ENCODE measurements at regions of chr9 and their contacts with region 1.

Region 1: DNA sequence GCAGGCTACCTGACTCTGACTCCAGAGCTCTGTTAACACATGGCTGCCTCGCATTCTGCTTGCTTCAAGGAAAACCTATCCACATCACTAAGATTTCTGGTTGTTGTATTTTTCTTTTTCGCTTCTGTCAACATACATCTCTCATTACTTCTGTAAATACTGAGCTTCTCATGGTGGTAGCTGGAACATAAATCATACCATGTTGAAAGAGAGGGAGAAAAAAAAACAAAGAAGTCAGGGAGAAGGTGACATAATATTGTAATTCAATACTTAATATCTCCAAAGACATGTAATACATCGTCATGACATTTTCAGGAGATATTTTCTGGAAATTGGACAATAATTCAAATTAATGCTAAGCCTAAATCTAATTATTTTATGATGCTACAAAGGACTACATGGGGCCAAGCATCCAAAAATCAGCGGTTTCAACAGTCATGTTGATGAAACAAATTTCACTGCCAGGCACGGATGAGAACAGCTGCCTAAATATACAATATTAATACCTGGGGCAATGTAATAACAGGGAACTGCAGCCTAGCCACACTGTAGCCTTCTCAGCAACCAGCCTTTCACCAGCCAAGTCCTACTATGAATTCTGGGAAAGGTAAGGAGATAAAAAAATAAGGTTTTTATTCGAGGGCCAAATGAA is 332.0 kb downstream of the TRIM32 start:
- DNase-seq: no peak
- ATAC-seq: no peak
- H3K4me3 ChIP-seq: no peak overlapping the region
- H3K27ac ChIP-seq: no peak overlapping the region
- H3K4me1 ChIP-seq: no peaks in the 10 kb centered on the region
- H3K27me3 ChIP-seq: peaks cover 0 to 2% (median 0%) of the 10 kb centered on the region in 3 donors
- CTCF ChIP-seq: no peak

Region 2: GRCh38 chr9:116959809-116960208 is 59.3 kb before region 1 on chr9:
- intact Hi-C with region 1: no loop called
- DNase-seq: no peak
- ATAC-seq: no peak
- H3K4me3 ChIP-seq: no peak overlapping the region
- H3K27ac ChIP-seq: no peak overlapping the region
- H3K4me1 ChIP-seq: no peaks in the 10 kb centered on the region
- H3K27me3 ChIP-seq: no peaks in the 10 kb centered on the region
- CTCF ChIP-seq: no peak

Region 3: DNA sequence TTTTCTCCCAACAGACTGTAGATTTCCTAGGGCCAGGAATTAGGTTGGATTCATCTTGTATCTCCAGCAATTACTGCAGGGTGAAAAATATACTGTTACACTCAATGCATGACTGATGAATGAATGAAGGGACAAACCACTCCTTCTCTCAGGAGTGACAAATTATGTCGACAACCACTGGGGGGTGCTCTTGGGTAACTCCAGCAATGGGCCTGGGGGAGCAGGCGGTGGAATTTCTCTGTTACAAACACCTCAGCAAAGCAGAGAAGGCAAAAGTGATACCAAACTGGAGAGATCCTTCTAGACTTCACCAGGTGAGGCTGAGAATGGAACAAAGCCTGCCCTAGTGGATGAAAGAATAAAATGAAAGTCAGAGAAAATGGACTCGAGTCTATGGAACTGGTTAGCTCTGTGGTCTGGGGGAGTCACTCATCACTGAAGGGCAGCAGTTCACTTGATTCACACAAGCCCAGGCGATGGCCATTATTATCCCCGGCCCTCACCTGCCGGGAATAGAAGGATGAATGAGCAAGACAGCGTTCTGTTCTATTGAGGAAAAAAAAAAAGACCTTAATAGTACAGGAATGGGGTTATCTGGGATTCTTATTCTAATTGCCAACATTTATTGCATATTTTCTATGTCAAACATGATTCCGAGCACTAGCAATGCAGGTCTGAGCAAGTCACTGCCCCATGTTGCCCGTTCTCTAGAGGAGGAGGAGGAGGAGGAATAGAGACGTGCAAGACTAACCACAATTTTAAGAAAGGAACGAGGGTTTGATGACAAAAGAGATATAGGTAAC is 54.6 kb after region 1 on chr9:
- intact Hi-C with region 1: loop called in 1 of 2 experiments (anchors 10 kb)
- DNase-seq: no peak
- ATAC-seq: peak in 2 of 4 donors; percentile 52 to 56
- H3K4me3 ChIP-seq: no peak overlapping the region
- H3K27ac ChIP-seq: no peak overlapping the region
- H3K4me1 ChIP-seq: no peaks in the 10 kb centered on the region
- H3K27me3 ChIP-seq: peaks cover 0 to 4% (median 0%) of the 10 kb centered on the region in 3 donors
- CTCF ChIP-seq: peak; percentile 43